Lower leg skin (tissue), 4 donors: ENCODE measurements at regions of chr21 and their contacts with region 1.

Region 1: DNA sequence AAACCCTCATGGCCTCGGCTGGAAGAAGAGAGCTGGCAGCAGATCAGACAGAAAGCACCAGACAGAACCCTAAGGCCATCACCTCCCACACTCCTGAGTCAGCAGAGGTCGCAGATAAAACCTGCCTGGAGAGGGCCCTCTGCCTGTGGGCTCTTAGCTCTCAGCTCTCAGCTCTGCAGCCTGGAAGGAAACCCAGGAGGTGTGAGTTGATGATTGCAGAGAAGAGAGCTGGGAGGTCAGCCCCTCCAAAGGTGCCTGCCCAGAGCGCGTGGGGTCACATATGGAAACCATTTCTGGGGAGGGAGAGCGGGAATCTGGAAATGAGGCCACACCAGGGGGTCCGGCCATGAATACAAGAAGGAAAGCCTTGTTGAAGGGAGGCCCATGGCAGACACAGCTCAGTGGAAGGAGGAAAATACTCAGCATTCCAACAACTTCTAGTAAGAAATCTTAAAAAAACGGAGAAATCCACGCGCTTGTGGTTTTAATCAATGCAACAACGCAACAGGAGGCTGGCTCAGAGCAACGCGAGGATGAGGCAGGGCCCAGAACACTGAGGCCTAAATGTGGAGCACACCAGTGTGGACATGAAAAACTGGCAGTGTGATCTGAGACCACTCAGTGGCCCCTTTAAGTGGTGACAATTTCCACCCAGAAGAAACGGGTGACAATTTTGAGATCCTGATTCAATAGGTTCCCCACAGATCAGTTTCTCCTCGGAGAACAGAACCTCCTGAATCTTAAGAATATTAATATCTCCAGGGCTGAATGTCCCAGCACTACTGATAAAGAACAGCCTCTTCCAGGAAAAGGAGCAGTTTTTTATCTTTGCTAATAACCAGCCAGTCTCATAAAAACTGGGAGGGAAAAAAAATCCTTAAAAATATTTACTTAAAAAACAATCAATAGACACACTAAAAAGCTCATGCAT is 45.7 kb downstream of the PSMG1 start:
- DNase-seq: no peak
- H3K4me3 ChIP-seq: no peak overlapping the region
- CTCF ChIP-seq: no peak
- POLR2A ChIP-seq: no peak

Region 2: GRCh38 chr21:38505654-38506515 is 631.6 kb before region 1 on chr21:
- intact Hi-C with region 1: loop called (anchors 10 kb)
- DNase-seq: peak in 1 of 2 donors; percentile 46
- H3K4me3 ChIP-seq: no peak overlapping the region
- CTCF ChIP-seq: no peak
- POLR2A ChIP-seq: no peak

Region 3: GRCh38 chr21:38733973-38734546 is 403.5 kb before region 1 on chr21:
- intact Hi-C with region 1: loop called (anchors 5 kb)
- DNase-seq: peak; percentile 89 to 99
- H3K4me3 ChIP-seq: no peak overlapping the region
- CTCF ChIP-seq: peak in 2 of 3 donors; percentile 21 to 95
- POLR2A ChIP-seq: no peak

Region 4: DNA sequence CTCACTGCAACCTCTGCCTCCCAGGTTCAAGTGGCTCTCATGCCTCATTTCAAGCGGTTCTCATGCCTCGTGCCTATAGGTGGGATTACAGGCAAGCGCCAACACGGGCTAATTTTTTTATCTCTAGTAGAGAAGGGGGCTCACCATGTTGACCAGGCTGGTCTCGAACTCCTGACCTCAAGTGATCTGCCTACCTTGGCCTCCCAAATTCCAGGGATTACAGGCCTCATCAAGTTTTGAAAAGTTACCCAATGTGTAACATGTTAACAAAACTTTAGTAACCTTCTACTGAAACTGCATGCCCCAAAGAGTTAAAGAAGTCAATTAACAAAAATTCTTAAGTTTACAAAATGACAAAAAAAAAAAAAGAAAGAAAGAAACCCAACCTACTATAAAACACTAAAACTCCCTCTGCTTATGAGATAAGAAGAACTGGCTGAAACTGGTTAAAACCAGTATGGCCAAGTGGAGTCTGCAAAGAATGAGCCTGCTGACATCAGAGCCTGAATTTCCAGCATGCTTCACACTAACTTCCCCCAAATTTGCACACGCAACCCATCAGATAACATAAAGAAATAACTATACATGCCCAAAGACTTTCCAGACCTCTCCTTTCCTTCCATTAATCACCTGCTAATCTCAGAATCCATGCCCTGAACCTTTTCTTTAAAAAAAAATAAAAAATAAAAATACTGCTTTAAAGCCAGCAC is 71.3 kb after region 1 on chr21:
- intact Hi-C with region 1: no loop called
- DNase-seq: no peak
- H3K4me3 ChIP-seq: no peak overlapping the region
- CTCF ChIP-seq: no peak
- POLR2A ChIP-seq: no peak